ENCODE measurements at regions of chr11 and their contacts with region 1.

Region 1: DNA sequence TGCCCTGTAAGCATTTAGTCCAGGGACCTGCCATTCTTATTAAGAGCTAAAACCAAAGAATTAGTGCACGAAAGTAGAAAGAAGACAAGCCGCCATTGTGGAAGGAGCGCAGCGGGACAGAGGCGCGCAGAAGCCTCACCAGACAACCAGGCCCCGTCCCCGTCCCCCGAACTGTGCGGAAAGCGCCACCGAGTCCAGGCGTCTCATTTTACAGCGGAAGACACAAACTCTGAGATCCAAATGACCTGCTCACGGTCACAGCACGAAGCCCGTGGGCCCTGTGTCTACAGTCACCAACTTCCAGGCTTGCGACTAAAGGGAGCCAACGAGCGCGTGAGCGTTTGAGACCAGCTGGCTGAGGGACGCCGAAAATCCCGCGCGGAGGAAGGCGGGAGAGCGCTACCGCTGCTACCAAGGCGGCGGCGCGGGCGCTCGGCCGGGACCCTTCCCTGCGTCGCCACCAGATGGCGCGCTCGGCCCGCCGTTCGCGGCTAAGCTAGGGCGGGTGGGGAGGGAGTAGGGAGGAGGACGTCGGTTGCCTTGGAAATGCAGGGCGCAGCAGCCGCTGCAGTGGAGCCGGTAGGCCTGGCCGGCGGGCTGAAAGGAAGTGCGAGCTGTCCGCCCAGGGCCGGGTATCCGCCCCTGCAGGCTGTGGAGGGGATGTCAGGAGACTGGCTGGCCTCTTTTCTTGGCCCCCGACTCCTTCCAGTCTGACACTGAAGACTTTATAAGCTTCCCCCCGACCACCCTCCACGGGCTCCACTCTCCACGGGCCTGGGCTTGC is 434 bp upstream of the CCDC83 start:
- DNase-seq: peak; percentile 94 to 98 (median 97)
- H3K4me3 ChIP-seq: peak overlapping the region; percentile 60 to 96 (median 86)
- H3K27ac ChIP-seq: peak overlapping the region; percentile 61 to 82
- H3K4me1 ChIP-seq: peaks cover 3 to 12% (median 8%) of the 10 kb centered on the region in 4 experiments
- H3K27me3 ChIP-seq: no peaks in the 10 kb centered on the region

Region 2: GRCh38 chr11:85866137-85866827 is 11.5 kb after region 1 on chr11:
- CTCF ChIA-PET with region 1: interaction called, 11 read pairs
- POLR2A ChIA-PET with region 1: no interaction called
- DNase-seq: no peak
- H3K4me3 ChIP-seq: no peak overlapping the region
- H3K27ac ChIP-seq: no peak overlapping the region
- H3K4me1 ChIP-seq: no peaks in the 10 kb centered on the region
- H3K27me3 ChIP-seq: peaks cover 0 to 2% (median 0%) of the 10 kb centered on the region in 5 experiments

Region 3: GRCh38 chr11:86291466-86292262 is 436.9 kb after region 1 on chr11:
- CTCF ChIA-PET with region 1: interaction called, 11 read pairs
- POLR2A ChIA-PET with region 1: no interaction called
- DNase-seq: peak; percentile 67 to 81 (median 70)
- H3K4me3 ChIP-seq: no peak overlapping the region
- H3K27ac ChIP-seq: no peak overlapping the region
- H3K4me1 ChIP-seq: peaks cover 0 to 1% (median 0%) of the 10 kb centered on the region in 4 experiments
- H3K27me3 ChIP-seq: no peaks in the 10 kb centered on the region